ENCODE measurements at regions of chr10 and their contacts with region 1.

Region 1: GRCh38 chr10:77173615-77174461 is 463.8 kb downstream of the KCNMA1 start:
- DNase-seq: no peak
- H3K4me3 ChIP-seq: no peak overlapping the region
- H3K27ac ChIP-seq: peak overlapping the region; percentile 41 to 69 (median 65)
- H3K4me1 ChIP-seq: peaks cover 0 to 50% (median 41%) of the 10 kb centered on the region in 4 donors
- H3K27me3 ChIP-seq: no peaks in the 10 kb centered on the region
- CTCF ChIP-seq: peak; percentile 86 to 94 (median 94)
- EP300 ChIP-seq: no peak
- POLR2A ChIP-seq: no peak

Region 2: DNA sequence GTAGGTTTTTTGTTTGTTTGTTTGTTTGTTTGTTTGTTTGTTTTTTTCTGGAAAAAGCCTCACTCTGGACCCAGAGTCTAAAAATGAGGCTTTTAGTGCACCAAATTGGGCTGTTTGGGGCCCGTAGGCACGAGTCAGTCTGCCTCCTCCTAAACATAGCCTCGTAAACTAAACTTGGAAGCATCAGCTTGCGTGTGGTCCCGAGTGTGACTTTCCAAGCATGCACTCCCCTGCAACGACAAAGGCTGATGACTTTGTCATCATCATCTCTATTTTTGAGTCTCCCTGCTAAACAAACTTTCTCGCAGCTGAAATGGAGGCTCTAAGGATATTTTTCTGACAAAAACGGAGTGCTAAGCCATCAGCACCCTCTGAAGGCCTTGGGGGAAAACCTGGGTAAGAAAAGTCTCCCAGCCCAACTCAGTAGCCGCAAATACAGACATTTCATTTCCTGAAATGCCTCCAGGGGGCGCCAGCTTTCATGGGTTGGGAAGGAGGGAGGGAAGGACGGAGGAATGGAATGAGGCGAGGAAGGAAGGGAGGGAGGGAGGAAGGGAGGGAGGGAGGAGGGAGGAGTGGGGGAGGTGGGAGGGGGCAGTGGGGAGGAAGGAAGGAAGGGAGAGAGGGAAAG is 217.9 kb after region 1 on chr10:
- intact Hi-C with region 1: loop called (anchors 5 kb)
- DNase-seq: no peak
- H3K4me3 ChIP-seq: no peak overlapping the region
- H3K27ac ChIP-seq: peak overlapping the region; percentile 73 to 82 (median 79)
- H3K4me1 ChIP-seq: peaks cover 13 to 85% (median 77%) of the 10 kb centered on the region in 4 donors
- H3K27me3 ChIP-seq: no peaks in the 10 kb centered on the region
- CTCF ChIP-seq: peak; percentile 61 to 73 (median 64)
- EP300 ChIP-seq: no peak
- POLR2A ChIP-seq: no peak

Region 3: DNA sequence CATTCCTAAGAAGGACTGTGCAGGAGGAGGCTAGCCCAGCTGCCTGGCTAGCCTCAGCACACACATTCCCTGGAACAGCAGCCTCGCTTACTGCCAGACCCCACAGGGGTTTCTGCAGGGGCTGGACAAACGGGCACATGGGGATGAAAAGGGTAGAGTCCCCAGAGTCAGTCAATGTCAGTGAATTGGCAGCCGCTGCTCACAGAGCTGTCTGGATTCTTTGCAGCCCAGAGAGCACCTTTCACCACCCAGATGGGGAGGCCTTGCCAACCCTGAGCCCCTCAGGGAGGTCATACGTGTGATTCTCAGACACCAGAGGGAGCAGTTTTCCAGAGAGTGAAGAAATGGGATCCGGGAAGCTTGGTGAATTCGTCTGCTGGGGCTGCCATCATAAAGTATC is 320.5 kb after region 1 on chr10:
- intact Hi-C with region 1: loop called (anchors 10 kb)
- DNase-seq: no peak
- H3K4me3 ChIP-seq: no peak overlapping the region
- H3K27ac ChIP-seq: peak overlapping the region in 1 of 4 donors; percentile 58
- H3K4me1 ChIP-seq: peaks cover 0 to 80% (median 50%) of the 10 kb centered on the region in 4 donors
- H3K27me3 ChIP-seq: no peaks in the 10 kb centered on the region
- CTCF ChIP-seq: peak in 2 of 3 experiments; percentile 39 to 42
- EP300 ChIP-seq: no peak
- POLR2A ChIP-seq: no peak